GM12878 (cell line): ENCODE measurements at regions of chr4 and their contacts with region 1.

Region 1: DNA sequence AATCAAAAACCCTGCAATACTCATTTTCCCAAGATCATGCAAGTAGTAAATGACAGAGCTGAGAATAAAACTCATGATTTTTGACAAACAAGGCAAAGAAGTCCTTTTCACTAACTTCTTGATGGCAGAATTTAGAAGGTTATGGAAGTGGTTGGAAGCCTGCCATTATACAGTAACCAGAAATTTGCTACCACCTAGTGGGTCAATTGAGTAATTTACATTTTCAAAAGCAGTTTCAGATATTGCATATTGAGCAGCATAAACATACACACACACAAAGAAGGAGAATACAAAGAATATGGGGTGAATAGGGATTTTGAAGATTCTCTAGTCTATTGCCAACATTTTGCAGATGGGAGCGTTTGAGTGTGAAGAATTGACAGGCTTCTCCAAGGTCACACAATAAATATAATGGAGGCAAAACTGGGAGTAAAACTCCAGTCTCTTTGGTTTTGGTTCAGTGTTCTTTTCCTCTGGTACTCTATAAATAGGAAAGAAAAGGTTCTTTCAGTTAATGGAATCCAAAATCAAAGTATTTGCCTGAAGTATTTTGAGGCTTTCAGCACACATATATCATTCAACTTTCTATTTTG is 70.2 kb downstream of the GC start:
- DNase-seq: no peak
- ATAC-seq: peak; percentile 70
- H3K4me3 ChIP-seq: no peak overlapping the region
- H3K27ac ChIP-seq: no peak overlapping the region
- H3K4me1 ChIP-seq: no peaks in the 10 kb centered on the region
- H3K27me3 ChIP-seq: no peaks in the 10 kb centered on the region
- CTCF ChIP-seq: peak; percentile 33 to 66 (median 46); a peak in 5 of 6 replicates
- EP300 ChIP-seq: no peak
- POLR2A ChIP-seq: no peak
- RAD21 ChIP-seq: peak; percentile 86

Region 2: DNA sequence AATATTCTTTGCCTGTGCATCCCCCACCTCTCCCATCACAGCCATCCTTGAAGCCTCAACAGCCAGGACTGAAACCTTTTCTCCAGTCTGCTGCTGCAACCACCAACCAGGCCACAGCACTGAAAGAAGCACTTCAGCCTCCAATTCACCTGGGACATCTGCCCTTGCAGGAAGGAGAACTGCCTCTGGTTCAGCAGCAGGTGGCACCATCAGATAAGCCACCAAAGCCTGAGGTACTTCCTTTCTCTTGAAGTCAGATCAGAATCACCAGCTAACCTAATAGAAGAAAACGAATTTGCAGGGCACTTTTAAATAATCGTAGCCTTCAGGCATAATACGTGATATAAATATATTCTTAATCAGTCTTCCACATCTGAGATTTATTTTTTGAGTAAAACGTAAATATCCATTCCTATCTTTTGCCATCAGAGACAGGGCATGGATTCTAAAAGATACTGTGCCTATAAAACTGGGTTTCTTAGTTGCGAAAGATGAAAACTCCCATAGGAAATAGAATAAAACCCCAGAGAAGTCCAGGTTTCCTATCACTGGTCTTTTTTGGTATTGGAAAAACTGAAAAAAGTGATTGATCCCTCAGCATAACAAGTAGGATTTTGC is 1112.2 kb before region 1 on chr4:
- CTCF ChIA-PET with region 1: interaction called, 5 read pairs
- POLR2A ChIA-PET with region 1: no interaction called
- RAD21 ChIA-PET with region 1: no interaction called
- SMC1A ChIA-PET with region 1: interaction called, 4 read pairs
- in situ Hi-C with region 1: loop called (anchors 25 kb)
- intact Hi-C with region 1: loop called (anchors 5 kb)
- DNase-seq: peak; percentile 34
- ATAC-seq: peak; percentile 98
- H3K4me3 ChIP-seq: no peak overlapping the region
- H3K27ac ChIP-seq: no peak overlapping the region
- H3K4me1 ChIP-seq: no peaks in the 10 kb centered on the region
- H3K27me3 ChIP-seq: no peaks in the 10 kb centered on the region; a peak in 1 of 4 replicates
- CTCF ChIP-seq: peak; percentile 90 to 94 (median 92)
- EP300 ChIP-seq: no peak
- POLR2A ChIP-seq: no peak
- RAD21 ChIP-seq: peak; percentile 99

Region 3: GRCh38 chr4:71501992-71502391 is 211.7 kb before region 1 on chr4:
- CTCF ChIA-PET with region 1: no interaction called
- POLR2A ChIA-PET with region 1: no interaction called
- RAD21 ChIA-PET with region 1: no interaction called
- SMC1A ChIA-PET with region 1: no interaction called
- in situ Hi-C with region 1: no loop called
- intact Hi-C with region 1: loop called (anchors 5 kb)
- DNase-seq: no peak
- ATAC-seq: no peak
- H3K4me3 ChIP-seq: no peak overlapping the region
- H3K27ac ChIP-seq: no peak overlapping the region
- H3K4me1 ChIP-seq: no peaks in the 10 kb centered on the region
- H3K27me3 ChIP-seq: no peaks in the 10 kb centered on the region
- CTCF ChIP-seq: no peak
- EP300 ChIP-seq: no peak
- POLR2A ChIP-seq: no peak
- RAD21 ChIP-seq: no peak

Region 4: DNA sequence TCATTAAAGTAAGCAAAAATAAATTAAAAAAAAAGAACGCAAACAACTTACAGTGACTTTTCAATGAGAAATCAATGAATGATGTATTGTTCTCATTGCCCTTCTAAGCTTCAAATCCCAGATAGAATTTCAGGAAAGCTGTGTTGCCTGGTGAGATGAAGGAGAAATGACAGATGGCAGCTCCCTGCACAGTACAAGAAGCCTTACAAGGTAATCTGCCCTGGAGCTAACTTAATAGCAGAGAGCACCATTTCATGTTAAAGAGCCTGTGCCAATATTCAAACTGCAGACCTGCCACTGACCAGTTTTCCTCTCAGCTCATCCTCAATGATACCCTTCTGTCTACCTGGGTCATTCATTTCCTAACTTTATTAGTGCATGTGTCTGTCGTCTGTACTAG is 16.1 kb after region 1 on chr4:
- CTCF ChIA-PET with region 1: no interaction called
- POLR2A ChIA-PET with region 1: no interaction called
- RAD21 ChIA-PET with region 1: no interaction called
- SMC1A ChIA-PET with region 1: no interaction called
- in situ Hi-C with region 1: no loop called
- intact Hi-C with region 1: no loop called
- DNase-seq: no peak
- ATAC-seq: no peak
- H3K4me3 ChIP-seq: no peak overlapping the region
- H3K27ac ChIP-seq: no peak overlapping the region
- H3K4me1 ChIP-seq: no peaks in the 10 kb centered on the region
- H3K27me3 ChIP-seq: no peaks in the 10 kb centered on the region
- CTCF ChIP-seq: no peak
- EP300 ChIP-seq: no peak
- POLR2A ChIP-seq: no peak
- RAD21 ChIP-seq: no peak

Region 5: GRCh38 chr4:71814433-71814832 is 100.7 kb after region 1 on chr4:
- CTCF ChIA-PET with region 1: no interaction called
- POLR2A ChIA-PET with region 1: no interaction called
- RAD21 ChIA-PET with region 1: no interaction called
- SMC1A ChIA-PET with region 1: no interaction called
- in situ Hi-C with region 1: no loop called
- intact Hi-C with region 1: no loop called
- DNase-seq: no peak
- ATAC-seq: no peak
- H3K4me3 ChIP-seq: no peak overlapping the region
- H3K27ac ChIP-seq: no peak overlapping the region
- H3K4me1 ChIP-seq: no peaks in the 10 kb centered on the region
- H3K27me3 ChIP-seq: no peaks in the 10 kb centered on the region
- CTCF ChIP-seq: no peak
- EP300 ChIP-seq: no peak
- POLR2A ChIP-seq: no peak
- RAD21 ChIP-seq: no peak